Right lobe of liver (tissue), 6 donors: ENCODE measurements at regions of chr15 and their contacts with region 1.

Region 1: GRCh38 chr15:40217159-40217824 is 21.6 kb upstream of the PAK6 start:
- DNase-seq: peak in 1 of 3 donors; percentile 55
- ATAC-seq: peak; percentile 96 to 99 (median 97)
- H3K4me3 ChIP-seq: no peak overlapping the region
- H3K27ac ChIP-seq: no peak overlapping the region
- H3K4me1 ChIP-seq: no peaks in the 10 kb centered on the region
- H3K27me3 ChIP-seq: no peaks in the 10 kb centered on the region
- CTCF ChIP-seq: peak; percentile 87 to 91 (median 87)
- POLR2A ChIP-seq: no peak

Region 2: GRCh38 chr15:40081691-40082194 is 135.5 kb before region 1 on chr15:
- intact Hi-C with region 1: no loop called
- DNase-seq: peak; percentile 69 to 77 (median 73)
- ATAC-seq: peak; percentile 80 to 87 (median 84)
- H3K4me3 ChIP-seq: peak overlapping the region; percentile 0 to 23 (median 19)
- H3K27ac ChIP-seq: peak overlapping the region; percentile 48 to 82 (median 63)
- H3K4me1 ChIP-seq: peaks cover 0 to 31% (median 20%) of the 10 kb centered on the region in 4 donors
- H3K27me3 ChIP-seq: no peaks in the 10 kb centered on the region
- CTCF ChIP-seq: no peak
- POLR2A ChIP-seq: no peak

Region 3: DNA sequence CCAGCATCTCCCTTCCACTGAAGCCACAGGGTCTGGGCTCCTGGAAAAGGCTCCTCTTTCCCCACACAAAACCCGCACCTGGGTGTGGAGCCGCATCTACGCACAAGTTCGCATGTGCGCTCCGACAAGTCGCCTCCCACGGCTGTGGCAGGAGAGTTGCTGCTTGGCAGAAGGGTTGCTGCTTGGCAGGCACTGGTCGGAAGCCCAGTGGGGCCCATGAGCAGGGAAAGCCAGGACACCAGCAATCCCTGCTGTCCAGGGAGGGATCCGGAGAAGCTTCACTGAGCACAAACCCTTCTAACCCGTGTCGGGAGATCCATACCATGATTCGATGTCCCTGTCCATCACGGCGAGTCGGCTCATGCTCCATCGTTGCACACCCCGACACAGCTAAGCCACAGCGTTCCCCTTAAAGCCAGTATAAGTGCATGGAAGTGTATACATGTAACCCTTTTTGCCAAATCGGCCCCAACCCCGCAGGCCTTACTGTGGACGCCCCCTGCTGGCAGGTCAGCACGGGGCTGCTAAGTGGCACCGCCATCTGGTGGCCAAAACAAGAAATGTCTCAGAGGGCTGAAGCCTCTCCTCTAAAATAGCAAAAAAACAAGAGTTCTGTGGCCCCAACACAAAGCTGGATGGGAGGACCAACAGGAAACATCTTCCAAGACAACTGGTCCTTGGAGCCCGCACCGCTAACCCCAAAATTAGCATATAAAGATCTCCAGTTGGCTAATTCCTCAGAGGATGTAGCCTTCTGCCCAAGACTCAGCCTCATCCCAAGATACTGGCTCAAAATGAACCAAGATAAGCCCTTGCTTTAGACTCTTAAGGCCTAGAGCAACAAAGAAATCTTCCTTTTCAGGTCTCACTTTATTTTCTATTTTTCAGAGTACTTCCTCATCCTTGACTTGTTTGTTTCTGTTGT is 57.3 kb after region 1 on chr15:
- intact Hi-C with region 1: loop called (anchors 5 kb)
- DNase-seq: peak; percentile 84 to 85 (median 85)
- ATAC-seq: peak; percentile 77 to 87 (median 81)
- H3K4me3 ChIP-seq: no peak overlapping the region
- H3K27ac ChIP-seq: no peak overlapping the region
- H3K4me1 ChIP-seq: peaks cover 0 to 9% (median 0%) of the 10 kb centered on the region in 4 donors
- H3K27me3 ChIP-seq: no peaks in the 10 kb centered on the region
- CTCF ChIP-seq: peak; percentile 100
- POLR2A ChIP-seq: no peak

Region 4: GRCh38 chr15:40536501-40536900 is 319.2 kb after region 1 on chr15:
- intact Hi-C with region 1: no loop called
- DNase-seq: no peak
- ATAC-seq: no peak
- H3K4me3 ChIP-seq: no peak overlapping the region
- H3K27ac ChIP-seq: no peak overlapping the region
- H3K4me1 ChIP-seq: no peaks in the 10 kb centered on the region
- H3K27me3 ChIP-seq: no peaks in the 10 kb centered on the region
- CTCF ChIP-seq: no peak
- POLR2A ChIP-seq: no peak